ENCODE measurements at regions of chr17 and their contacts with region 1.

Region 1: DNA sequence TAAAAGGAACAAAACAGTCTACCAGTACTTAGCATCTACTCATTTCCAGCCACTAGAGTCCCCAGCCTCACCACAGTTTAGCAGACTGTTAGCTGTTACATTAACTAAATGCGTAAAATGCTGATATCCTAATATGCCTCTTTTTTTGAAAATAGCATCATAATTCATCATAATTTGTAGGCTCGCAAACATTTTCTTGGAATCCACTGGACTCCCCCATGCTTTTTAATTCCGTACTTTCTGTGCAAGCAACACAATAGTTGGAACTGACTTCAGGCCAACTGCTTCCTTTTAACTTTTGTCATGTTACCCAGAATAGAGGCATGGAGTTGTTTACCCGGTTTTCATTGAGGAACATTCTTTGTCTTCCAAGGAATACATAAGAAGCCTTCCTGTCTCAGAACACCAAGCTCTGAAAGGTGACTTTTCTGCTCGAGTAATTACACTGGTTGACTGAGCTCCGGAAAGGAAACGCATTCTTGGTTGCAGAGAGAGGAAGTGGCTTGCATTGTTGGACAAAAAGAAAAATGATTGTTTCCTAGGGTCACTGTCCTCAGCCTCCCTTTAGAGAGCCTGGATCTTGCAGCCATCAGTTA is 30.9 kb upstream of the SEC14L1 start:
- DNase-seq: peak; percentile 99
- H3K4me3 ChIP-seq: no peak overlapping the region
- H3K27ac ChIP-seq: peak overlapping the region; percentile 99
- H3K4me1 ChIP-seq: peaks cover 43% of the 10 kb centered on the region
- H3K27me3 ChIP-seq: no peaks in the 10 kb centered on the region
- CTCF ChIP-seq: peak in 1 of 2 donors; percentile 23
- POLR2A ChIP-seq: no peak

Region 2: GRCh38 chr17:77088455-77089123 is 21.3 kb before region 1 on chr17:
- CTCF ChIA-PET with region 1: interaction called, 10 read pairs
- POLR2A ChIA-PET with region 1: interaction called, 10 read pairs
- dilution Hi-C with region 1: no loop called
- intact Hi-C with region 1: loop called (anchors 1 kb)
- DNase-seq: peak; percentile 96
- H3K4me3 ChIP-seq: peak overlapping the region; percentile 68 to 92 (median 73)
- H3K27ac ChIP-seq: peak overlapping the region; percentile 94
- H3K4me1 ChIP-seq: peaks cover 56% of the 10 kb centered on the region
- H3K27me3 ChIP-seq: no peaks in the 10 kb centered on the region
- CTCF ChIP-seq: peak; percentile 78 to 95
- POLR2A ChIP-seq: peak; percentile 80

Region 3: GRCh38 chr17:77120868-77121267 is 11.0 kb after region 1 on chr17:
- CTCF ChIA-PET with region 1: interaction called, 25 read pairs
- POLR2A ChIA-PET with region 1: interaction called, 30 read pairs
- dilution Hi-C with region 1: no loop called
- intact Hi-C with region 1: loop called (anchors 1 kb)
- DNase-seq: peak; percentile 57
- H3K4me3 ChIP-seq: no peak overlapping the region
- H3K27ac ChIP-seq: peak overlapping the region; percentile 98
- H3K4me1 ChIP-seq: peaks cover 72% of the 10 kb centered on the region
- H3K27me3 ChIP-seq: no peaks in the 10 kb centered on the region
- CTCF ChIP-seq: no peak
- POLR2A ChIP-seq: no peak

Region 4: DNA sequence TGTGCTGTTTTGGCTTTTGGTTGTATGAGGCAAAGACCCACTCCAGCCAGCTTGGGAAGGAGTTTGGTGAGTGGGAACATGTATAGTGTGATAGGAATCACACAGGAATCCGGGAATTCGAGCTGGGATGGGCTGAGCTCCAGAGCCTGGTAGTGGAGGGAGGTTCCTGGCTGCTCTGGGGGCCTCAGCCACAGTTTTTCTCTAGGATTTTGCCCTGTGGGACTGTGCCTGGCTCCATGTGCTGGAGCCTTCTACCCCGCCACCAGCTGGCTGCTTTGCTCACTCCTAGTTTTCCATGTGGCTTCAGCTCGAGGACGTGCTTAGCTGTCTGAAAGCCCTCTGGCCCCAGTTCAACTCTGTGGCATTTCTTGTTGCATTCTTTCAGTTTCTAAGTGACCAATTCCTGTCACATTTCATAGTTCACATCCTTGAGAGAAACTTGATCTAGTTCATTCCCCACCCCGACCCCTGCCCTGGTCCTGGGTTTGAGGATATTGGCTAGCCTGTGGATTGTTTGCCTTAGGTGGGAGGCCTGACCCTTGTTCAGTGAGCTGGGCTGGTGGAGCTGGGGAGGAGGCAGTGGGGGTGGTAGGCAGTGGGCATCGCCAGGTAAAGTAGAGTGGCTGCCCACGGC is 35.9 kb after region 1 on chr17:
- CTCF ChIA-PET with region 1: interaction called, 15 read pairs
- POLR2A ChIA-PET with region 1: interaction called, 13 read pairs
- dilution Hi-C with region 1: no loop called
- intact Hi-C with region 1: loop called (anchors 1 kb)
- DNase-seq: peak; percentile 80
- H3K4me3 ChIP-seq: peak overlapping the region in 2 of 3 experiments; percentile 23 to 67
- H3K27ac ChIP-seq: peak overlapping the region; percentile 97
- H3K4me1 ChIP-seq: peaks cover 84% of the 10 kb centered on the region
- H3K27me3 ChIP-seq: no peaks in the 10 kb centered on the region
- CTCF ChIP-seq: peak in 1 of 2 donors; percentile 47
- POLR2A ChIP-seq: peak; percentile 23

Region 5: GRCh38 chr17:77208217-77208808 is 98.5 kb after region 1 on chr17:
- CTCF ChIA-PET with region 1: interaction called, 9 read pairs
- POLR2A ChIA-PET with region 1: no interaction called
- dilution Hi-C with region 1: no loop called
- intact Hi-C with region 1: loop called (anchors 1 kb)
- DNase-seq: peak; percentile 78
- H3K4me3 ChIP-seq: no peak overlapping the region
- H3K27ac ChIP-seq: peak overlapping the region; percentile 91
- H3K4me1 ChIP-seq: peaks cover 58% of the 10 kb centered on the region
- H3K27me3 ChIP-seq: no peaks in the 10 kb centered on the region
- CTCF ChIP-seq: peak in 1 of 2 donors; percentile 49
- POLR2A ChIP-seq: peak; percentile 42